Stomach (tissue), 19 donors: ENCODE measurements at regions of chr15 and their contacts with region 1.

Region 1: DNA sequence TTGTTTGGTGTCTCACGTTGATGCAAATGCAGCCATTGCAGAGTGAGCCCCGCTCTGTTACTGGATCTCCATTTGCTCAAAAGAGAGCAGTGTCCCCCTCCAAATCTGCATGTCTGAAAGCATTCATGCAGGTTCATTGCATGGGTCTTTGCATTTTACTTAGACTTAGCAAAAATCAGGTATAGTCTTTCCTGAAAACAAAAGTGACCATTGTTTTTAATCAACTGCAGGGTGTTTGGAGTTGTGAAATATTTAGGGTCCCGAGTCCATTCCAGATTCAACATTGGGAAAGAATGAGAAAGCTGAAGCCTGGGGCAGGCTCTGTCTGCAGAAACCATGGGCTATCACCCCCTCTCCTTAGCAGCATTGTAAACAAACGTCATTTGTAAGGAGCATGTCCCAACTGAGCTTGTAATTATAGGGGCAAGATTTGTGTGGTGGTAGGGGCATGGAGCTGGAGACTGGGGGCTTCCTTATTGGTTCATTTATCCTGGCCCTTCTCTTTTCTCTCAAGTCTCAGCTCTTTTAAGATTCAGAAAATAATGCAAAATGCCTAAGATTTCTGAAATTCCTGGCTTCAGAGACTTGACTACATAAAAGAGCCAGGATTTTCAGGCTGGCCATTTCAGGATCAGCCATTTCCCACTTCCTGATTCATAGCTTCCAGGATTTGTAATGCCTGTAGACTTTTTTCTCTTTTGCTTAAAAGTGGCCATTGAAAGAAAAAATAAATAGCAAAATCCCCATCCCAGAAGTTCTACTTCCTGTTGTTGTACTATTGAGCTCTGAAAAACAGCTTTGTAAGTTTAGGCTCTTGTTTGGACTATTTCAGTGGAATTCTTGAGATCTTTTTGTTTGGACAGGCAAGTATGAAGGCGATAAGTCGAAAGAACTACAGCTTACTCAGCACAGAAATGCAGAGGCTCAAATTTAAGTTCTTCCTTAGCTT is 23.0 kb downstream of the IGF1R start:
- DNase-seq: peak in 1 of 2 donors; percentile 56
- H3K4me3 ChIP-seq: no peak overlapping the region
- H3K27ac ChIP-seq: peak overlapping the region; percentile 48 to 78 (median 72)
- H3K4me1 ChIP-seq: peaks cover 42 to 87% (median 64%) of the 10 kb centered on the region in 4 donors
- H3K27me3 ChIP-seq: no peaks in the 10 kb centered on the region
- CTCF ChIP-seq: no peak
- EP300 ChIP-seq: no peak
- POLR2A ChIP-seq: no peak

Region 2: GRCh38 chr15:98745650-98746622 is 74.6 kb after region 1 on chr15:
- intact Hi-C with region 1: loop called (anchors 10 kb)
- DNase-seq: no peak
- H3K4me3 ChIP-seq: no peak overlapping the region
- H3K27ac ChIP-seq: peak overlapping the region; percentile 4 to 34 (median 28)
- H3K4me1 ChIP-seq: peaks cover 18 to 87% (median 65%) of the 10 kb centered on the region in 4 donors
- H3K27me3 ChIP-seq: no peaks in the 10 kb centered on the region
- CTCF ChIP-seq: no peak
- EP300 ChIP-seq: no peak
- POLR2A ChIP-seq: no peak

Region 3: DNA sequence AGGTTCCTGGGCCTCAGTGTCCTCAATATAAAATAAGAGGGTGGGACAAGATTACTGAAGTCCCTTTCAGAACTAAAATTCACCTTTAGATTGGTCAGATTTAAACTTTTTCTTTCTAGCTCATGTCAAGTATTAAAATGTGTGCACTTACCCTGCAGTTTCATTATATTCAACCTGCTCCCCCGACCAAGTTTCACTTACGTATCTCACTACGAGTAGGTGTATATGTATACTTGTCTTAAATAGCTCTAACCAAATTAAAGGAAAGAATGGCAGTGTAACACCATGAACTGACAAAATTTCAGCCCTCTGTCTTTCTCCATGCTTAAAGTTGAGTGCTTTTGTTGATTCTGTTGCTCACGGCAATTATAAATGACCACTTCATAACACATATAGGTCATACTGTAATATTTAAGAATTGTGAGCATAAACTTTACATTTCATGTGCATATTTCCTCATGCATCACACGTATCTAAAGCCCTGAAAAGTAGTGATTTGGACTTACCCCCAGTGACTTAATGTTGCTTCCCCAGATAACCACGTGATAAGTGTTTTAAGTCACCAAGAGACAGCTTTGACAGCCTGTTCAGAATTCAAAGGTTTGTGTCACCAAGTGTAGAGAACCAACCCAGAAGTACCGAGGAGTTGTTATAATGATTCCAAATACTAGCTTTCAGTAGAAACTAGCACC is 266.2 kb after region 1 on chr15:
- intact Hi-C with region 1: no loop called
- DNase-seq: no peak
- H3K4me3 ChIP-seq: no peak overlapping the region
- H3K27ac ChIP-seq: no peak overlapping the region
- H3K4me1 ChIP-seq: peaks cover 3 to 18% (median 14%) of the 10 kb centered on the region in 4 donors
- H3K27me3 ChIP-seq: no peaks in the 10 kb centered on the region
- CTCF ChIP-seq: no peak
- EP300 ChIP-seq: no peak
- POLR2A ChIP-seq: no peak